Body of pancreas (tissue), 4 donors: ENCODE measurements at regions of chr15 and their contacts with region 1.

Region 1: GRCh38 chr15:40217159-40217824 is 21.6 kb upstream of the PAK6 start:
- DNase-seq: peak; percentile 60 to 86 (median 68)
- ATAC-seq: peak; percentile 97
- H3K4me3 ChIP-seq: no peak overlapping the region
- H3K27ac ChIP-seq: no peak overlapping the region
- H3K4me1 ChIP-seq: no peaks in the 10 kb centered on the region
- H3K27me3 ChIP-seq: no peaks in the 10 kb centered on the region
- CTCF ChIP-seq: peak; percentile 61 to 94 (median 89)
- POLR2A ChIP-seq: no peak

Region 2: GRCh38 chr15:40044717-40045571 is 172.3 kb before region 1 on chr15:
- intact Hi-C with region 1: loop called (anchors 5 kb)
- DNase-seq: peak; percentile 86 to 91 (median 88)
- ATAC-seq: peak; percentile 92
- H3K4me3 ChIP-seq: no peak overlapping the region
- H3K27ac ChIP-seq: peak overlapping the region in 1 of 4 donors; percentile 7
- H3K4me1 ChIP-seq: peaks cover 45% of the 10 kb centered on the region
- H3K27me3 ChIP-seq: no peaks in the 10 kb centered on the region
- CTCF ChIP-seq: peak; percentile 85 to 98 (median 93)
- POLR2A ChIP-seq: no peak

Region 3: GRCh38 chr15:40182358-40183029 is 34.8 kb before region 1 on chr15:
- intact Hi-C with region 1: no loop called
- DNase-seq: no peak
- ATAC-seq: no peak
- H3K4me3 ChIP-seq: no peak overlapping the region
- H3K27ac ChIP-seq: no peak overlapping the region
- H3K4me1 ChIP-seq: no peaks in the 10 kb centered on the region
- H3K27me3 ChIP-seq: no peaks in the 10 kb centered on the region
- CTCF ChIP-seq: no peak
- POLR2A ChIP-seq: no peak